HepG2 (cell line): ENCODE measurements at regions of chr2 and their contacts with region 1.

Region 1: GRCh38 chr2:70190418-70191243 is at the start of gene C2orf42:
- DNase-seq: peak; percentile 98
- ATAC-seq: peak; percentile 96
- H3K4me3 ChIP-seq: peak within 1 kb of the TSS; percentile 69 to 88 (median 86)
- H3K27ac ChIP-seq: peak within 1 kb of the TSS; percentile 83
- H3K4me1 ChIP-seq: peaks cover 36% of the 10 kb centered on the region
- H3K27me3 ChIP-seq: no peaks in the 10 kb centered on the region; a peak in 1 of 5 replicates
- CTCF ChIP-seq: peak; percentile 54
- EP300 ChIP-seq: 0 out of 4 replicates have a peak, but pooled peaks of 1 of the 2 experiments have one; percentile 60
- POLR2A ChIP-seq: peak; percentile 96 to 99
- RAD21 ChIP-seq: peak; percentile 29
- total RNA-seq, gene C2orf42: 9.9 and 11.1 TPM in 2 replicates

Region 2: GRCh38 chr2:69375494-69376353 is 814.9 kb before region 1 on chr2:
- CTCF ChIA-PET with region 1: no interaction called
- POLR2A ChIA-PET with region 1: no interaction called
- in situ Hi-C with region 1: no loop called
- intact Hi-C with region 1: no loop called
- DNase-seq: no peak
- ATAC-seq: peak; percentile 67
- H3K4me3 ChIP-seq: no peak overlapping the region
- H3K27ac ChIP-seq: no peak overlapping the region
- H3K4me1 ChIP-seq: peaks cover 8% of the 10 kb centered on the region
- H3K27me3 ChIP-seq: no peaks in the 10 kb centered on the region
- CTCF ChIP-seq: peak; percentile 64
- EP300 ChIP-seq: no peak
- POLR2A ChIP-seq: no peak
- RAD21 ChIP-seq: peak; percentile 33; the same call in 1 of the 2 replicates

Region 3: DNA sequence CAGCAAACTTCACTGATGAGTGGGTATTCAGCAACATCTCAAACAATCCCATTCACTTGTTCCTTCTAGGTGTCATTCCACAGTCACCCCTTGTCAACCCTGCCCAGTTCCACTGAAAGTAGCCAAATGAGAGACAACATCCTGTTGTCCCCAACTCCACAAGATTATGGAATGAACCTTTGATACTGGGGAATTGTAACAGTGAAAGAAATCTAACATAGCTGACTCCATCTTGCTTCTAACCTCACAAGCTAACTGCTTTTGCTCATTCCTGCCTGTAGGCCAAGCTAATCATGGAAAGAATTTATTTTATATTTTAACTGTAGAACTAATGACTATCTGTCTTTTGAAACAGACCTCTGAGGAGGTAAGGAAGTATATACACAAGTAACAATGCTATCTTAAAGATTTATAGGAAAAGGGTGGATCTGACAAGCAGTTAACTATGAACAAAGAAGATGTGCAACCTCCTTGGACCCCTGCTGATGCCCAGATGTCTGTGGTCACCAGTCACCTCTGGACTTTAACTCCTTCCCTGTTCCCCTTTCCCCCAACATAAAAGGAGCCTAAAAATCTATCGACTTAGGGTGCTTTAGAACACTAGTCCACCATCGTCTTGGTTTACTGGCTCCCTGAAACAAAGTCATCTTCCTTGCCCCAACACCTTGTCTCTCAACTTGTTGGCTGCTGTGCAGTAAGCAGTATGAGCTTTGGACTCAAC is 455.6 kb before region 1 on chr2:
- CTCF ChIA-PET with region 1: no interaction called
- POLR2A ChIA-PET with region 1: no interaction called
- in situ Hi-C with region 1: no loop called
- intact Hi-C with region 1: no loop called
- DNase-seq: no peak
- ATAC-seq: no peak; the same call in 2 of the 3 replicates
- H3K4me3 ChIP-seq: no peak overlapping the region
- H3K27ac ChIP-seq: peak overlapping the region; percentile 55
- H3K4me1 ChIP-seq: peaks cover 49% of the 10 kb centered on the region
- H3K27me3 ChIP-seq: no peaks in the 10 kb centered on the region
- CTCF ChIP-seq: no peak
- EP300 ChIP-seq: no peak
- POLR2A ChIP-seq: no peak
- RAD21 ChIP-seq: no peak

Region 4: DNA sequence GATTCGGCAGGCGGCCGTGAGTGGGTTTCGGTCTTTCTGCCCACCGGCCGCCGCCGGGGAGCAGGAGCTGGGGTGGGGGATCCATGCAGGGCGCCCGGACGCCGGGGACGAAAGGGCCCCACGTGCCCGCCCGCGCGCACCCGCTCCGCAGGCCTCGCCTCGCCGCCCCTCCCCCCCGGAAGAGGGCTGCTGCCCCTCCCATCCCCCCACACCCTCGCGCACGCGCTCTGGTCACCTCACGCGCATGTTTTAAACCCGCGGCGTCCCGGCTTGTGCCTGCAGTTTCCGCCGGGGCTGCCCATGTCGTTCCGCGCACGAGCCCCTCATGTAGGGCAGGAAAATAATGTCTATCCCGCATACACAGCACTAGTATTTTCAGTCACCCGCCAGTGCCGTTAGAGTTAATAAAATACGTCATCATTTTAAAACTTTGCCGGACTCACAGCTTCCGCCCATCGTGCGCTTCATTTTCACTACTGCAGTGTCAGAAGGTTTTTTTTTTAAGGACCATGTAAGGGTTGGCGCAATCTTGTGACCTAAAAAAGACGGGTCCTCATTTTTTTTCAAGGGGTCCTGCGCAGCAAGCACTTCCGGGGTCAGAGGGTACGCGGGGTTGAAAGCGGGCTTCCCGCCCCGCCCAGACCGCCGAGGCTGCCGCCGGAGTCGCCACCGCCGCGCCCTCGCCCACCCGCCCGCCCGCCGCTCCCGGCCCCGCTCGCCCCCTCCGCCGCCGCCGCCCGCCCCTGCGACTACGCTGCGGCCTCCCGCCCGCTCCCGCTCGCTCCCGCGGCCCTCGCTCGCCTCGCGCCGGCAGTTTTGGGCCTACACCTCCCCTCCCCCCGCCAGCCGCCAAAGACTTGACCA is 103.6 kb before region 1 on chr2 and contains the start of gene PCBP1:
- CTCF ChIA-PET with region 1: no interaction called
- POLR2A ChIA-PET with region 1: interaction called, 14 read pairs
- in situ Hi-C with region 1: no loop called
- intact Hi-C with region 1: no loop called
- DNase-seq: peak; percentile 94
- ATAC-seq: peak; percentile 49
- H3K4me3 ChIP-seq: peak within 1 kb of the TSS; percentile 93 to 95 (median 95)
- H3K27ac ChIP-seq: peak within 1 kb of the TSS; percentile 99
- H3K4me1 ChIP-seq: peaks cover 56% of the 10 kb centered on the region
- H3K27me3 ChIP-seq: no peaks in the 10 kb centered on the region; a peak in 1 of 5 replicates
- CTCF ChIP-seq: no peak
- EP300 ChIP-seq: no peak; a peak in 2 of 4 replicates
- POLR2A ChIP-seq: peak; percentile 71 to 81
- RAD21 ChIP-seq: peak; percentile 50; the same call in 1 of the 2 replicates
- total RNA-seq, gene PCBP1: 32.0 and 104 TPM in 2 replicates

Region 5: DNA sequence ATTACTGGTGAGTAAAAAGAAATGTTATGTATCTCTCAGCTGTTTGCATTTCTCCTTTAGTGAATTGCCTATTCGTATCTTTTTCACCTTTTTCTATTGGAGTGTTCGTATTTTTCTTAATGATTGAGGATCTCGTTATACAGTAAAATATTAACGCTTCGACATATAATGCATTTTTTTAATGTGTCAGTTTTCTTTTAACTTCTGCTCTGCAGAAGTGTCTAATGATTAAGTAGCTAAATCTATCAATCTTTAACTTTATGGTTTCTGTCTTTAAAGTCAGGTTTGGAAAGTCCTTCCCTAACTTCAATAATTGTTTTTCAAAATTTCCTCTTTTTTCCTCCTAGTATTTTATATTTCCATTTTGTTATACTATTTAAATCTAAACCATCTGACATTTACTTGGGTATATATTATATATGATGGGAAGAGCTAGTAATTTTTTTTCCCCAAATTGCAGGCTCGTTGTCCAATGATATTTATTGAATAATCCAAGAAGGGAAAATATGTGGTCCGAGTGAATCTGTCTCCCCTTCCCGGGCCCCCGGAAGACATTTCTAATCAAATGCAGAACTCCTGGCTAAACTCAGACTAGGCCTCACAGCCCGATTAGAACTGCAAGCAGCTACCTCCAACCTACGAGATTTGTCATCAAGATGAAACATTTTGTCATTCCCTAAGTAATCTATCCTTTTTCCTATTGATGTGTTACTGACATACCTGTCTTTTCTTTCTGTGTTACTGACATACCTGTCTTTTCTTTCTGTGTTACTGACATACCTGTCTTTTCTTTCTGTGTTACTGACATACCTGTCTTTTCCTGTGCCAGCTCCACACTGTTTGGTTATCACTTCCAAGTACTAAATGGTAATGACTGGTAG is 86.2 kb before region 1 on chr2:
- CTCF ChIA-PET with region 1: no interaction called
- POLR2A ChIA-PET with region 1: interaction called, 24 read pairs
- in situ Hi-C with region 1: no loop called
- intact Hi-C with region 1: no loop called
- DNase-seq: peak; percentile 69
- ATAC-seq: no peak
- H3K4me3 ChIP-seq: peak overlapping the region in 2 of 3 experiments; percentile 45 to 59; a peak in 4 of 6 replicates
- H3K27ac ChIP-seq: peak overlapping the region; percentile 55
- H3K4me1 ChIP-seq: peaks cover 54% of the 10 kb centered on the region
- H3K27me3 ChIP-seq: no peaks in the 10 kb centered on the region; a peak in 1 of 5 replicates
- CTCF ChIP-seq: no peak
- EP300 ChIP-seq: peak in 1 of 2 experiments; percentile 32; a peak in 1 of 4 replicates
- POLR2A ChIP-seq: no peak
- RAD21 ChIP-seq: no peak

Region 6: GRCh38 chr2:70201831-70202806 is 11.5 kb after region 1 on chr2:
- CTCF ChIA-PET with region 1: no interaction called
- POLR2A ChIA-PET with region 1: interaction called, 15 read pairs
- in situ Hi-C with region 1: no loop called
- intact Hi-C with region 1: no loop called
- DNase-seq: no peak
- ATAC-seq: peak; percentile 15
- H3K4me3 ChIP-seq: no peak overlapping the region
- H3K27ac ChIP-seq: no peak overlapping the region
- H3K4me1 ChIP-seq: peaks cover 5% of the 10 kb centered on the region; the same call in 1 of the 2 replicates
- H3K27me3 ChIP-seq: no peaks in the 10 kb centered on the region
- CTCF ChIP-seq: no peak
- EP300 ChIP-seq: no peak
- POLR2A ChIP-seq: no peak
- RAD21 ChIP-seq: no peak

Region 7: GRCh38 chr2:70258532-70258874 is 67.9 kb after region 1 on chr2:
- CTCF ChIA-PET with region 1: no interaction called
- POLR2A ChIA-PET with region 1: interaction called, 30 read pairs
- in situ Hi-C with region 1: no loop called
- intact Hi-C with region 1: no loop called
- DNase-seq: peak; percentile 41
- ATAC-seq: peak; percentile 70
- H3K4me3 ChIP-seq: peak overlapping the region; percentile 83 to 90 (median 83)
- H3K27ac ChIP-seq: peak overlapping the region; percentile 82
- H3K4me1 ChIP-seq: peaks cover 44% of the 10 kb centered on the region
- H3K27me3 ChIP-seq: no peaks in the 10 kb centered on the region; a peak in 1 of 5 replicates
- CTCF ChIP-seq: no peak
- EP300 ChIP-seq: no peak
- POLR2A ChIP-seq: no peak
- RAD21 ChIP-seq: no peak